Heart right ventricle (tissue), 16 donors: ENCODE measurements at regions of chr20 and their contacts with region 1.

Region 1: DNA sequence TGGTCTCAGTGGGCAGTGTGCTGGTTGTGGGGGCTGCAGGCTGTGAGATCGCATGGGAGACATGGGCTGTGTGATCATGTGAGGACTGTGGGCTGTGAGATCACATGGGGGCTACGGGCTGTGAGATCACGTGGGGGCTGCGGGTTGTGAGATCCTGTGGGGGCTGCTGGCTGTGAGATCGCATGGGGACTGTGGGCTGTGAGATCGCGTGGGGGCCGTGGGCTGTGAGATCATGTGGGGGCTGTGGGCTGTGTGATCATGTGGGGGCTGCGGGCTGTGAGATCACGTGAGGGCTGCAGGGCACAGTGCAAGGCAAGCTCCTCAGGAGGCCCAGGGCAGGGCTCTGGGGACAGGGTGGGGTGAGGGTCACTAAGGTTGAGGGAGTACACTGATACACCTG is 140.5 kb upstream of the CST7 start:
- DNase-seq: no peak
- ATAC-seq: no peak
- H3K4me3 ChIP-seq: no peak overlapping the region
- H3K27ac ChIP-seq: no peak overlapping the region
- H3K4me1 ChIP-seq: no peaks in the 10 kb centered on the region
- H3K27me3 ChIP-seq: peaks cover 0 to 17% (median 13%) of the 10 kb centered on the region in 7 donors
- CTCF ChIP-seq: no peak

Region 2: DNA sequence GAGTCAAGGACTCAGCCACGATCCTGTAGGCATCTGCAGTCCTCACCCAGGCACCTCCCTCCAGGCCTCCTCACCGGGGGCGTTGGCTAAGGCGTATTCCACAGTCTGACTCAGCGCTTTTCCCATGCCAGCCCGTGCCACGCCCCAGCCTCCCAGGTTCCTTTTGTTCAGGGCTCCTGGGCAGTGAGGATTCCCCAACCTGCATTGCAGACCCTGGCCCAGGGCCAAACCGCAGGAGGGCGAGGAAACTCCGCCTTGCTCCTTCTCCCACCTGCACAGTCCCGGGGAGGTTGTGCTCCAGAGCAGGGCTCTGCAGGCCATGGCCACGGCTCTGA is 62.3 kb before region 1 on chr20:
- intact Hi-C with region 1: loop called in 1 of 10 experiments (anchors 10 kb)
- DNase-seq: no peak
- ATAC-seq: no peak
- H3K4me3 ChIP-seq: no peak overlapping the region
- H3K27ac ChIP-seq: no peak overlapping the region
- H3K4me1 ChIP-seq: no peaks in the 10 kb centered on the region
- H3K27me3 ChIP-seq: peaks cover 0 to 13% (median 0%) of the 10 kb centered on the region in 7 donors
- CTCF ChIP-seq: no peak

Region 3: GRCh38 chr20:24897974-24898373 is 89.4 kb after region 1 on chr20:
- intact Hi-C with region 1: no loop called
- DNase-seq: no peak
- ATAC-seq: no peak
- H3K4me3 ChIP-seq: no peak overlapping the region
- H3K27ac ChIP-seq: no peak overlapping the region
- H3K4me1 ChIP-seq: no peaks in the 10 kb centered on the region
- H3K27me3 ChIP-seq: no peaks in the 10 kb centered on the region
- CTCF ChIP-seq: no peak